Activated B cell treated with CpG ODN at 0.5 μM for 24 hours (primary cell): ENCODE measurements at regions of chr4 and their contacts with region 1.

Region 1: GRCh38 chr4:37891260-37892159 is 626 bp downstream of the TBC1D1 start:
- DNase-seq: no peak
- ATAC-seq: peak; percentile 47
- H3K4me3 Mint-ChIP-seq: peak overlapping the region; percentile 94
- H3K27ac Mint-ChIP-seq: peak overlapping the region; percentile 97
- H3K4me1 Mint-ChIP-seq: peaks cover 57% of the 10 kb centered on the region
- H3K27me3 Mint-ChIP-seq: no peaks in the 10 kb centered on the region
- CTCF ChIP-seq: no peak

Region 2: DNA sequence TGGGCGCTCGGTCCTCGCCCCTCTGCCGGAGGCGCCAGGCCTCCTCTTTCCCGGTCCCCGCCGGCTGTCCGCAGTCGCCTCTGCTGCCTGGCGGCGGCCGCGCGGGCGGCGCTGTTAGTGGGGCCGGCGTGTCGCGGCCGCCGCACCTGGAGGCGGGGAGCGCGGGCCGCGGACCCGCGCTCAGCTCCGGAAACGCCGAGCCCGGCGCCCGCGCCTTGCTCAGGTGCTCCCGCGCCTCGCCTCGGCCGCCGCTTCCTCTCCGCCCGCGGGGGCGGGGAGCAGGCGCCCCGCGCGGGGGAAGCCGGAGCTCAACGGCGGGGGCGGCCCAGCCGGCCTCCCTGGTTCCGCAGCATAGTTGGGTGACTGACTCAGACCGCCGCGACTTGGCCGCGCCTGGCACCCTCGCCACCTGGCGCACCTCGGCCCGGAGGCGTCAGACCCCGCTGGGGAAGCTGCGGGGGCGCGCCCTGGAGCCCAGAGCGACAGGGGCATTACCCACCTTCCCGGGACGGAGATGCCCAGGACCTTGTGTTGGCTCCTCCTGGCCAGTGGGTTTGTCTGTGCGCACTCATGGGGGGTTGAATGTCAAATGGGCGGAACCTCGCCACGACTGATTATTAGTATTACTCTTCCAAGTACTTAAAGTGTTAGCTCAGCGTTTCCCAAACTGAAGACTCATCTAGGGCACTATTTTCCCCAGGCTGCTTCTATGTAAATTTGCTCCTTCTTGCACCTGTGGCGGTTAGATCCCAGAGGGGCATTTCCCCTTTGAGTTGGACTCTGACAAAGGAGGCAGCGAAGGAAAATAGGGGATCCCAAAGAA is 1647.0 kb before region 1 on chr4 and contains the start of gene ARAP2:
- CTCF ChIA-PET with region 1: no interaction called
- POLR2A ChIA-PET with region 1: interaction called, 3 read pairs
- intact Hi-C with region 1: loop called (anchors 5 kb)
- DNase-seq: peak; percentile 78
- ATAC-seq: peak; percentile 83
- H3K4me3 Mint-ChIP-seq: peak within 1 kb of the TSS; percentile 90
- H3K27ac Mint-ChIP-seq: peak within 1 kb of the TSS; percentile 91
- H3K4me1 Mint-ChIP-seq: peaks cover 52% of the 10 kb centered on the region
- H3K27me3 Mint-ChIP-seq: no peaks in the 10 kb centered on the region
- CTCF ChIP-seq: no peak
- total RNA-seq, gene ARAP2: 55.7 and 59.1 TPM in 2 replicates

Region 3: GRCh38 chr4:37686373-37687193 is 204.9 kb before region 1 on chr4 and contains the start of gene RELL1:
- CTCF ChIA-PET with region 1: no interaction called
- POLR2A ChIA-PET with region 1: no interaction called
- intact Hi-C with region 1: loop called (anchors 1 kb)
- DNase-seq: peak; percentile 95
- ATAC-seq: peak; percentile 86
- H3K4me3 Mint-ChIP-seq: peak within 1 kb of the TSS; percentile 97
- H3K27ac Mint-ChIP-seq: peak within 1 kb of the TSS; percentile 80
- H3K4me1 Mint-ChIP-seq: peaks cover 41% of the 10 kb centered on the region
- H3K27me3 Mint-ChIP-seq: peaks cover 8% of the 10 kb centered on the region
- CTCF ChIP-seq: no peak
- total RNA-seq, gene RELL1: 0.71 and 1.0 TPM in 2 replicates

Region 4: DNA sequence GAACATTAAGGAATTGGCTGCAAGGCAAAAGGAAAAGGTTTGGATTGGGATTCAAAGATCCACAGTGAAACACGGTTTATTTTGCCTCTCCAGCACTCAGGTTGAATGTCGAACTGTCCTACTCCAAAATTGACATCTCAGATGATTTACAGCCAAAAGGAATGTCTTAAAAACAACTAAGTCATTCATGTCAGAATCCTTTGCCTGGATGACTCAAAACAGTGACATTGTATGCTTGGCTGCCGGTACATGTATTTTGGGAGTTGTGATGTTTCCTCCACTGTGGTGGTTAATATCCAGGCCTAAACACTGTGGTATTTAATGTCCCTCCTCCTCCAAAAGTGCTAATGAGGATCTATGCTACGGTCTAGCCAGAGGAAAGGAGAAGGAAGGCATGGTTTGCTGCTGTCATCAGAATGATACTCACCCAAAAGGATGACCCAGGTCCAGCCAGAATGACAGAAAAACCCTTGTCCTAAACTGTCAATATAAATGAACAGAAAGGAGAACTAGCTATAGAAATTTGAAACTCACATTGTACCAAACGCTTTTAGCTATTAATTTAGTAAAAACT is 44.1 kb before region 1 on chr4:
- CTCF ChIA-PET with region 1: no interaction called
- POLR2A ChIA-PET with region 1: interaction called, 3 read pairs
- intact Hi-C with region 1: loop called (anchors 1 kb)
- DNase-seq: no peak
- ATAC-seq: no peak
- H3K4me3 Mint-ChIP-seq: no peak overlapping the region
- H3K27ac Mint-ChIP-seq: no peak overlapping the region
- H3K4me1 Mint-ChIP-seq: peaks cover 10% of the 10 kb centered on the region
- H3K27me3 Mint-ChIP-seq: no peaks in the 10 kb centered on the region
- CTCF ChIP-seq: no peak

Region 5: GRCh38 chr4:37977471-37978247 is 86.1 kb after region 1 on chr4:
- CTCF ChIA-PET with region 1: interaction called, 3 read pairs
- POLR2A ChIA-PET with region 1: interaction called, 48 read pairs
- intact Hi-C with region 1: loop called (anchors 1 kb)
- DNase-seq: peak; percentile 62
- ATAC-seq: peak; percentile 73
- H3K4me3 Mint-ChIP-seq: peak overlapping the region; percentile 86
- H3K27ac Mint-ChIP-seq: peak overlapping the region; percentile 82
- H3K4me1 Mint-ChIP-seq: peaks cover 57% of the 10 kb centered on the region
- H3K27me3 Mint-ChIP-seq: no peaks in the 10 kb centered on the region
- CTCF ChIP-seq: no peak

Region 6: GRCh38 chr4:38663801-38664705 is 772.5 kb after region 1 on chr4 and contains the start of gene KLF3:
- CTCF ChIA-PET with region 1: no interaction called
- POLR2A ChIA-PET with region 1: no interaction called
- intact Hi-C with region 1: loop called (anchors 1 kb)
- DNase-seq: no peak
- ATAC-seq: peak; percentile 82
- H3K4me3 Mint-ChIP-seq: peak within 1 kb of the TSS; percentile 84
- H3K27ac Mint-ChIP-seq: peak within 1 kb of the TSS; percentile 88
- H3K4me1 Mint-ChIP-seq: peaks cover 67% of the 10 kb centered on the region
- H3K27me3 Mint-ChIP-seq: no peaks in the 10 kb centered on the region
- CTCF ChIP-seq: no peak
- total RNA-seq, gene KLF3: 14.5 and 15.9 TPM in 2 replicates